Ascending aorta (tissue), 2 donors: ENCODE measurements at regions of chr19 and their contacts with region 1.

Region 1: DNA sequence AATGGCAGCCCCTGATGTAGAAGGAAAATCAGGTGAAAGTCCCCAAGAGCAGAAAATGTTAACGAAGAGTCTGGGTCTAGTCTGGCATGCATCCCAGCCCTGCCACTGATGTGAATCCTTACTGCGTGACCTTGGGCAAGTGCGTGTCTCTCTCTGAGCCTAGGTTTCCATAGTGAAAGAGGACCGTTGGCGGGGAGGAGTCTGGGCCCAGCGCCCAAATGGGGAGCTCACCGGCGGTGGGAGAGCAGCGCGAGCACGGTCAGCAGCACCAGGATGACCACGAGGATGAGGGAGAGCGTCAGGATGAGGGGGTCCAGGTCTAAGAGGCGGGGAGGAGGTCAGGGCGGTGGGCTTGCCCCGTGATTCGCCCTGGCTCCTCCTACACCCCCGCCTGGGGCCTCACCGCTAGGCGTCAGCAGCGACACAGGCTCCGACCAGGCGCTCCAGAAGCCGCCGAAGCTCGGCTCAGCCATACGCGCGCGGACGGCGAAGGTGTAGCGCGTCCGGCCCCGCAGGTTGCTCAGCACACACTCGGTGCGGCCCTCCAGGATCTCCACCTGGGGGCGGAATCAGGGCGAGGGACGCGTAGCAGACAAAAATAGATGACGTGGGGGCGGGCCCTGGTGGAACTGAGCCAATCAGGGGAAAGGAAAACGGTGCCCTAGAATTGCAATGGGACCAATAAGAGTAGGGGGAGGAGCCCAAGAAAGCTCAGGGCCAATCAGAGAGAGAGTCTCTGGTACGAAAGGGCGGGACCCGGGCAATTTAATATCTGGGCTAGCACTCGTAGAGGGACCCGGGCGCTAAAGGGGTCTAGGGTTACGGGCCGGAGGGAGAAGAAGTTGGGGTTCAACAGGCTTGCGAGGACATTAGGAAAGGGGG is 3.2 kb downstream of the EPOR start:
- DNase-seq: peak; percentile 88 to 97
- H3K4me3 ChIP-seq: peak overlapping the region; percentile 71 to 81
- H3K27ac ChIP-seq: peak overlapping the region; percentile 81 to 84
- H3K4me1 ChIP-seq: peaks cover 17 to 56% of the 10 kb centered on the region in 2 donors
- H3K27me3 ChIP-seq: no peaks in the 10 kb centered on the region
- CTCF ChIP-seq: peak; percentile 70 to 87 (median 71)

Region 2: DNA sequence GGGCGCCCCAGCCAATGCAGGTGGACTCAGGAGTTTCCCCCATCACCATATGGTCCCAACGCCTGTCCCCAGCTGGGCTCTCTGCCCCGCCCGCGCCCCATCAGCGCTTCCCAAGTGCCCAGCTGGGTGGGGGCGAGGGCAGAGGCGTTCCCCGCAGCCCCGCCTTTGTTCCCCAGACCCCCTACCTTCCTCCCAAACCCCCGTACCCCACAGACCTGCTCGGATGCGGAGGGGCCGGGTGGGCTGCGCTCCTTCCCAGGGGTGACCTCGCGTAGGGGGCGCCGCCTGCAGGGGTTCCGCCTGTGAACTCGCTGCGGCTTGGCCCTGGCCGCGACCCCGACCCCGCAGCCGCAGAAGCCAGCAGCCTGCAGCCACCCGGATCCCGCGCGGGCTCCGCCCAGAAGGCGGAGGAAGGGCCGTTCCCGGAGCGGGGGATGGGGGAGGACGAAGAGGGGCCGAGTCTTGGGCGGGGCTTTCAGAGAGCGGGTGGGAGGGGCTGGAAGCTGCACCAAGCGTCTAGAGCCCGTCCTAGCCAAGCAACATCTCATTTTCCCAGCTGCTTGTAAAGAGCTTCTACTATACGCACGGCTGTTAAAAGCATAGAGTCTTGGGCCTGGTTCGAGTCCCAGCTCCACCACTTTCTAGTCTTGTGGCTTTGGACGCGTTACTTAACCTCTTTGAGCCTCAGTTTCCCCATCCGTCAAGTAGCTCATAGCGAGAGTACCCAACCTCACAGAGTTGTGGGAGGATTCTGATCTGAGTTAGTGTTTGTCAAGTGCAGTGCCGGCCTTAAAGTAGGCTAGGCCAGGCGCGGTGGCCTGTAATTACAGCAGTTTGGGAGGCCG is 41.4 kb before region 1 on chr19 and contains the start of gene RAB3D:
- intact Hi-C with region 1: no loop called
- DNase-seq: peak; percentile 64 to 94
- H3K4me3 ChIP-seq: peak within 1 kb of the TSS; percentile 71 to 90
- H3K27ac ChIP-seq: peak within 1 kb of the TSS; percentile 70 to 82
- H3K4me1 ChIP-seq: peaks cover 6 to 17% of the 10 kb centered on the region in 2 donors
- H3K27me3 ChIP-seq: no peaks in the 10 kb centered on the region
- CTCF ChIP-seq: no peak
- total RNA-seq, gene RAB3D: 33.6 TPM

Region 3: DNA sequence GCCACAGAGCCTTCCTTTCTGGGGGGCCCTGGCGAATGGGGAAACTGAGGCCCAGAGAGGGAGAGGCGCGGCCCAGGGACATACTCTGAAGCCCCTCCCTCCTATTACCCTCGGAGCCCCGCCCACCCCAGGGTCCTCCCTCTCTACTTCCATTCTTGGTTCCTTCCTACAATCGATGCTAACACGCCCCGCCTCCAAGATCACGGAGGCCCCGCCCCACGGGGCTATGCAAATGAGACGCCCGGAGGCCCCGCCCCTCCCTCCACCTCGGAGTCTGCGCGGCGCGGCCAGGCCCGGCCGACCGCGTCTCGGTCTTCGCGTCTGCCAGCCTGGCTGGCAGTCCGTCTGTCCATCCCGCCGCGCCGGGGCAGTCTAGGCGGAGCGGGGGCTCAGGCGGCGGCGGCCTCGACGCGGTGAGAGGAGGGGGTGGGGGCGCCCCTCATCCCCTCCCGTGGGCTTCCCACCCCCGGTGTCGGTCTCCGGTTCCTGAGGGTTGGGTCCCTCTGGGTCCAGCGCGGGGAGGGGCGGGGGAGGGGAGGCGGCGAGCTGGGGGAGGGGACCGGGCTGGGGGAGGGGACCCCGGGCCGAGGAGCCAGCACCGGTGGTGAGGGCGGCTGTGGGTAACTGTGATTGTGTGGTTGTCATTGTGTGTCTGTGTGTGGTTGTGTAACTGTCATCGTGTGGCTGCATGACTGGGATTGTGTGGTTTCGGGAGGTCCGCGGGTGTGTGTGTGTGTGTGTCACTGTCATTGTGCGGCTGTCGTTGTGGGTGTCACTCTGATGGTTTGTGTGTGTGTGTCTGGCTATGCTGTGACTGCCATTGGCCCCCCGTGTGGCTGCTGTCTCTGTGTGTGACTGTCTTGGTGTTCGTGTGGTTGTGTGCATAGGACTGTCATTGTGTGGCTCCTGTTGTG is 25.5 kb before region 1 on chr19 and contains the start of gene PLPPR2:
- intact Hi-C with region 1: loop called (anchors 1 kb)
- DNase-seq: peak; percentile 88 to 98
- H3K4me3 ChIP-seq: peak within 1 kb of the TSS; percentile 60 to 85
- H3K27ac ChIP-seq: peak within 1 kb of the TSS; percentile 73 to 77
- H3K4me1 ChIP-seq: peaks cover 3 to 10% of the 10 kb centered on the region in 2 donors
- H3K27me3 ChIP-seq: no peaks in the 10 kb centered on the region
- CTCF ChIP-seq: no peak
- total RNA-seq, gene PLPPR2: 61.4 TPM

Region 4: DNA sequence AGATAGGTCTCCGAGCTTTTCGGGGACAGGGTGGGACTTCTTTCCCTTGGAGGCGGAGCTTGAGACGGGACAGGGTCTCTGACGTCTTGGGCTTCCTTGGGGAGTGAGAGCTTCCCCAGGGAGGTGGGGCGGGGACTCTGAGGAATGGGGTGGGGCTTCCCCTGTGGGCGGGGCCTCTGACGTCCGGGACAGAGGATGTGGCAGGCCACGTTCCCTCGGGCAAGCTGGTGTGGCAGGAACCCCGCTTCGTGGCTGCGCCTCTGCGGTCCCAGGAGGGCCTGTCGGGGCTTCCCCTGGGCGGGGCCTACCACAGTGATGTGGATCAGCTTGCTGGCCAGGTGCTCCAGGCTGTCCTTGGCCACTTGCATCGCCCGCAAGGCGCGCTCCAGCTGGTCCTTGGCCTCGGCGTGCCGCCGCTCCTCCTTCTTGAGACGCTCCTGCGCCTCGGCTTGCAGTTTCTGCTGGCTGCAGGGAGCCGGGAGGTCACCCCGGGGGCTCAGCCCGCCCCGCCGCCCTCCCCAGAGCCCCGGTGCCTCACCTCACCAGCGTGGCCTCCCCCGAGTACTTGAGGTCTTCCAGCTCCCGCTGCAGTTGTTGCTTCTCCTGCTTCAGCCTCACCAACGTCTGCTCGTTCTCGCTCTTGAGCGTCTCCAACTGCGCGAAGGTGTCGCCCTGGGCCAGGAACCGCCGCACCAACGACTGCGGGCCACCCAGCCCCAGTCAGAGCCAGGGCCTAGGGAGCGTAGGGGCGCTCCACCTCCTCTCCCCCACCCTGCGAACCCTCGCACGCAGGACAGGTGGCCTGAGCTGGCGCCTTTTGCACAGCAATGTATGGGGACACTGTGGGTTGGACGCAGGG is 41.5 kb after region 1 on chr19:
- intact Hi-C with region 1: loop called (anchors 2 kb)
- DNase-seq: peak; percentile 77 to 90
- H3K4me3 ChIP-seq: peak overlapping the region; percentile 42 to 65
- H3K27ac ChIP-seq: peak overlapping the region; percentile 62 to 79
- H3K4me1 ChIP-seq: peaks cover 14 to 35% of the 10 kb centered on the region in 2 donors
- H3K27me3 ChIP-seq: no peaks in the 10 kb centered on the region
- CTCF ChIP-seq: no peak

Region 5: GRCh38 chr19:11505032-11505503 is 124.2 kb after region 1 on chr19:
- intact Hi-C with region 1: loop called (anchors 5 kb)
- DNase-seq: peak; percentile 93 to 98
- H3K4me3 ChIP-seq: peak overlapping the region; percentile 84 to 94
- H3K27ac ChIP-seq: peak overlapping the region; percentile 95 to 97
- H3K4me1 ChIP-seq: peaks cover 2 to 6% of the 10 kb centered on the region in 2 donors
- H3K27me3 ChIP-seq: no peaks in the 10 kb centered on the region
- CTCF ChIP-seq: no peak